GM12878 (cell line): ENCODE measurements at regions of chr20 and their contacts with region 1.

Region 1: GRCh38 chr20:43840382-43841070 is 74.1 kb upstream of the TOX2 start:
- DNase-seq: no peak
- ATAC-seq: peak; percentile 78
- H3K4me3 ChIP-seq: no peak overlapping the region
- H3K27ac ChIP-seq: peak overlapping the region; percentile 23; the same call in 1 of the 2 replicates
- H3K4me1 ChIP-seq: peaks cover 37% of the 10 kb centered on the region
- H3K27me3 ChIP-seq: no peaks in the 10 kb centered on the region
- CTCF ChIP-seq: peak; percentile 35 to 70 (median 51)
- EP300 ChIP-seq: no peak
- POLR2A ChIP-seq: no peak
- RAD21 ChIP-seq: peak; percentile 70

Region 2: DNA sequence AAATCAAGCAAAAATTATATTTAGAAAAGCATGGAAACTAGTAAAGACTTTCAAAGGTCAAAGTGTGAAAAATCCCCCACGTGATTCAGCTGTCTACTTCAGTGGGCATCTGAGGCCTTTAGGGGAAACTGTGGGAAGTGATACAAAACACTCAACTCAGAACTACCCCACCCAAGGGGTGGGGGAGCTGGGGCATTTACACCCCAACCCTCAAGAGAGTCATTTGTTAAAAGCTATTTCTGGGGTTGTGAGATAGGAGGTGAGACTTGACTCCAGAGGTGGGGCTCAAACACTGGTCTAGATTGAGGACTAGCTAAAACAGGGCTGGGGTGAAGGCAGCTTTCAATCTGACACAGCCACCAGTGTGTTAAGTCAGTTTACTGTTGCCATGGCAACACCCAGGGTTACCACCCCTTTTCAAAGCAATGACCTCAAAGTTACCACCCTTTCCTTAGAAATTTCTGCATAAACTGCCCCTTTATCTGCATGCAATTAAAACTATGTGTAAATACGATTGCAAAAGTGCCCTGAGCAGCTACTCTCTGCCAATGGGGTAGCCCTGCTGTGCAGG is 103.9 kb before region 1 on chr20:
- CTCF ChIA-PET with region 1: interaction called, 11 read pairs
- POLR2A ChIA-PET with region 1: interaction called, 8 read pairs
- RAD21 ChIA-PET with region 1: interaction called, 10 read pairs
- SMC1A ChIA-PET with region 1: interaction called, 5 read pairs
- in situ Hi-C with region 1: no loop called
- intact Hi-C with region 1: no loop called
- DNase-seq: peak; percentile 79
- ATAC-seq: peak; percentile 95
- H3K4me3 ChIP-seq: no peak overlapping the region
- H3K27ac ChIP-seq: no peak overlapping the region
- H3K4me1 ChIP-seq: peaks cover 38% of the 10 kb centered on the region
- H3K27me3 ChIP-seq: no peaks in the 10 kb centered on the region
- CTCF ChIP-seq: no peak
- EP300 ChIP-seq: peak; percentile 75 to 92
- POLR2A ChIP-seq: no peak
- RAD21 ChIP-seq: no peak

Region 3: DNA sequence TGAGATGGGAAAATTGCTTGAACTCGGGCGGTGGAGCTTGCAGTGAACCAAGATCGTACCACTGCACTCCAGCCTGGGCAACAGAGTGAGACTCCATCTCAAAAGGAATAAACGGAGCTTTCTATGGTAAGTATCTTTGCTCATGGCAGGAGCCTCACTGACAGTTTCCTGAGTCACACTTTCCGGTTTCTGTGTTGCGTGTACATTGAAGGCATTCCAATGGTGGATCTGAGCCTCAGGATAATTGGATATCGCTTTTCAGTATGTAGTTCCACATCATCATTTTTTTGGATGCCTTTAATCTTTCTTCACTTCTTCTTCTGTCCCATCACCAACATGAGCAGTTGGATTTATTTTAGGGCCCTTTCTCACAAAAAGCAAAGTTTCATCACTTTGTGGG is 85.1 kb before region 1 on chr20:
- CTCF ChIA-PET with region 1: interaction called, 129 read pairs
- POLR2A ChIA-PET with region 1: interaction called, 6 read pairs
- RAD21 ChIA-PET with region 1: interaction called, 98 read pairs
- SMC1A ChIA-PET with region 1: interaction called, 72 read pairs
- in situ Hi-C with region 1: no loop called
- intact Hi-C with region 1: loop called (anchors 1 kb)
- DNase-seq: no peak
- ATAC-seq: no peak
- H3K4me3 ChIP-seq: no peak overlapping the region
- H3K27ac ChIP-seq: no peak overlapping the region
- H3K4me1 ChIP-seq: peaks cover 28% of the 10 kb centered on the region
- H3K27me3 ChIP-seq: no peaks in the 10 kb centered on the region
- CTCF ChIP-seq: no peak
- EP300 ChIP-seq: no peak
- POLR2A ChIP-seq: no peak
- RAD21 ChIP-seq: no peak

Region 4: GRCh38 chr20:43824309-43825050 is 16.0 kb before region 1 on chr20:
- CTCF ChIA-PET with region 1: interaction called, 5 read pairs
- POLR2A ChIA-PET with region 1: interaction called, 3 read pairs
- RAD21 ChIA-PET with region 1: interaction called, 5 read pairs
- SMC1A ChIA-PET with region 1: interaction called, 17 read pairs
- in situ Hi-C with region 1: no loop called
- intact Hi-C with region 1: no loop called
- DNase-seq: no peak
- ATAC-seq: peak; percentile 5
- H3K4me3 ChIP-seq: no peak overlapping the region
- H3K27ac ChIP-seq: no peak overlapping the region
- H3K4me1 ChIP-seq: peaks cover 24% of the 10 kb centered on the region
- H3K27me3 ChIP-seq: no peaks in the 10 kb centered on the region
- CTCF ChIP-seq: no peak
- EP300 ChIP-seq: no peak
- POLR2A ChIP-seq: no peak
- RAD21 ChIP-seq: no peak

Region 5: DNA sequence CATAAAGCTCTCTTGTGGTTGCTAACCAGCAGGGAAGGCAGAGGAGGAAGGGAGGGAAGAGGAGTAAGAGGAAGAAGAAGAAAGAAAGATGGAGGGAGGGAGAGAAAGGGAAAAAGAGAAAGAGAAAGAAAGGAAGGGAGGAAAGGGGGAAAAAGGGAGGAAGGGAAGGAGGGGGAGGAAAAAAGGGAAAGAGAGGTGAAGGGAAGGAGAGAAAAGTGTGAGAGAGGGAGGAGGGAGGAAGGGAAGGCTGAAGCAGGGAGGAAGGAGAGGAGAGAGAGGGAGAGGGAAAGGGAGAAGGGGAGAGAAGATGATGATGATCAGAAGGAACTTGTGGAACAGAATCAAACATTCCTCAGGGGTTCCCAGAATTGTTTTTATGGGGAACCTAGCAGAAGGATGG is 16.6 kb after region 1 on chr20:
- CTCF ChIA-PET with region 1: interaction called, 10 read pairs
- POLR2A ChIA-PET with region 1: interaction called, 3 read pairs
- RAD21 ChIA-PET with region 1: no interaction called
- SMC1A ChIA-PET with region 1: interaction called, 9 read pairs
- in situ Hi-C with region 1: no loop called
- intact Hi-C with region 1: no loop called
- DNase-seq: no peak
- ATAC-seq: no peak
- H3K4me3 ChIP-seq: no peak overlapping the region
- H3K27ac ChIP-seq: no peak overlapping the region
- H3K4me1 ChIP-seq: no peaks in the 10 kb centered on the region
- H3K27me3 ChIP-seq: no peaks in the 10 kb centered on the region
- CTCF ChIP-seq: no peak
- EP300 ChIP-seq: no peak
- POLR2A ChIP-seq: no peak
- RAD21 ChIP-seq: no peak

Region 6: GRCh38 chr20:43914311-43915210 is 74.0 kb after region 1 on chr20 and contains the start of gene TOX2:
- CTCF ChIA-PET with region 1: interaction called, 6 read pairs
- POLR2A ChIA-PET with region 1: no interaction called
- RAD21 ChIA-PET with region 1: no interaction called
- SMC1A ChIA-PET with region 1: interaction called, 8 read pairs
- in situ Hi-C with region 1: no loop called
- intact Hi-C with region 1: loop called (anchors 5 kb)
- DNase-seq: no peak
- ATAC-seq: peak; percentile 43
- H3K4me3 ChIP-seq: peak within 1 kb of the TSS; percentile 68; the same call in 1 of the 2 replicates
- H3K27ac ChIP-seq: peak within 1 kb of the TSS; percentile 28; the same call in 1 of the 2 replicates
- H3K4me1 ChIP-seq: peaks cover 18% of the 10 kb centered on the region
- H3K27me3 ChIP-seq: peaks cover 0 to 4% of the 10 kb centered on the region in 2 experiments; a peak in 2 of 4 replicates
- CTCF ChIP-seq: no peak
- EP300 ChIP-seq: no peak
- POLR2A ChIP-seq: no peak; the same call in 1 of the 2 replicates
- RAD21 ChIP-seq: no peak
- polyA plus RNA-seq, gene TOX2: 2.6 to 6.2 TPM